B cell (primary cell): ENCODE measurements at regions of chr6 and their contacts with region 1.

Region 1: DNA sequence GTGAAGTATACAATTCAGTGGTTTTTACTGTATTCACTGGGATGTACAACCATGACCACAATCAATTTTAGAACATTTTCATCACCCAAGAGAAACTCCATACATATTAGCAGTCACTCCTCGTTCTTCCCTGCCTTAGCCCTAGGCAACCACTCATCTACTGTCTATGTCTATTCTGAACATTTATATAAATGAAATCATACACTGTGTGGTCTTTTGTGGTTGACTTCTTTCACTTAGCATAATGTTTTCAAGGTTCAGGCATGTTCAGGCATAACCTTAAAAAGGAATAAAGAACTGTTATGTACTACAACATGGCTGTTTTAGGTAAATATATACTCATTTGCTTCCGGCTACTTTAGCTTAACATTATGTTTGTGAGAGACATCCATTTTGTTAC is 37.3 kb downstream of the BLTP3A start:
- DNase-seq: no peak
- ATAC-seq: no peak
- H3K4me3 ChIP-seq: no peak overlapping the region
- H3K4me3 Mint-ChIP-seq: no peak overlapping the region
- H3K27ac ChIP-seq: no peak overlapping the region
- H3K27ac Mint-ChIP-seq: no peak overlapping the region
- H3K4me1 ChIP-seq: no peaks in the 10 kb centered on the region
- H3K4me1 Mint-ChIP-seq: no peaks in the 10 kb centered on the region
- H3K27me3 ChIP-seq: no peaks in the 10 kb centered on the region
- H3K27me3 Mint-ChIP-seq: no peaks in the 10 kb centered on the region
- CTCF ChIP-seq: no peak

Region 2: GRCh38 chr6:34810936-34811632 is 18.1 kb before region 1 on chr6:
- CTCF ChIA-PET with region 1: interaction called, 3 read pairs
- POLR2A ChIA-PET with region 1: interaction called, 12 read pairs
- intact Hi-C with region 1: no loop called
- DNase-seq: no peak
- ATAC-seq: peak; percentile 54
- H3K4me3 ChIP-seq: no peak overlapping the region
- H3K4me3 Mint-ChIP-seq: no peak overlapping the region
- H3K27ac ChIP-seq: no peak overlapping the region
- H3K27ac Mint-ChIP-seq: no peak overlapping the region
- H3K4me1 ChIP-seq: no peaks in the 10 kb centered on the region
- H3K4me1 Mint-ChIP-seq: peaks cover 19% of the 10 kb centered on the region
- H3K27me3 ChIP-seq: no peaks in the 10 kb centered on the region
- H3K27me3 Mint-ChIP-seq: no peaks in the 10 kb centered on the region
- CTCF ChIP-seq: no peak

Region 3: GRCh38 chr6:35259194-35259947 is 430.2 kb after region 1 on chr6 and contains the start of gene ZNF76:
- CTCF ChIA-PET with region 1: no interaction called
- POLR2A ChIA-PET with region 1: no interaction called
- intact Hi-C with region 1: no loop called
- DNase-seq: peak; percentile 97
- ATAC-seq: peak; percentile 81
- H3K4me3 ChIP-seq: peak within 1 kb of the TSS; percentile 63 to 90 (median 81)
- H3K4me3 Mint-ChIP-seq: peak within 1 kb of the TSS; percentile 99
- H3K27ac ChIP-seq: peak within 1 kb of the TSS; percentile 97 to 98
- H3K27ac Mint-ChIP-seq: peak within 1 kb of the TSS; percentile 98
- H3K4me1 ChIP-seq: peaks cover 21 to 30% of the 10 kb centered on the region in 2 donors
- H3K4me1 Mint-ChIP-seq: peaks cover 47% of the 10 kb centered on the region
- H3K27me3 ChIP-seq: no peaks in the 10 kb centered on the region
- H3K27me3 Mint-ChIP-seq: no peaks in the 10 kb centered on the region
- CTCF ChIP-seq: no peak
- total RNA-seq, gene ZNF76: 96.9 and 107 TPM in 2 replicates